ENCODE measurements at regions of chr4 and their contacts with region 1.

Region 1: DNA sequence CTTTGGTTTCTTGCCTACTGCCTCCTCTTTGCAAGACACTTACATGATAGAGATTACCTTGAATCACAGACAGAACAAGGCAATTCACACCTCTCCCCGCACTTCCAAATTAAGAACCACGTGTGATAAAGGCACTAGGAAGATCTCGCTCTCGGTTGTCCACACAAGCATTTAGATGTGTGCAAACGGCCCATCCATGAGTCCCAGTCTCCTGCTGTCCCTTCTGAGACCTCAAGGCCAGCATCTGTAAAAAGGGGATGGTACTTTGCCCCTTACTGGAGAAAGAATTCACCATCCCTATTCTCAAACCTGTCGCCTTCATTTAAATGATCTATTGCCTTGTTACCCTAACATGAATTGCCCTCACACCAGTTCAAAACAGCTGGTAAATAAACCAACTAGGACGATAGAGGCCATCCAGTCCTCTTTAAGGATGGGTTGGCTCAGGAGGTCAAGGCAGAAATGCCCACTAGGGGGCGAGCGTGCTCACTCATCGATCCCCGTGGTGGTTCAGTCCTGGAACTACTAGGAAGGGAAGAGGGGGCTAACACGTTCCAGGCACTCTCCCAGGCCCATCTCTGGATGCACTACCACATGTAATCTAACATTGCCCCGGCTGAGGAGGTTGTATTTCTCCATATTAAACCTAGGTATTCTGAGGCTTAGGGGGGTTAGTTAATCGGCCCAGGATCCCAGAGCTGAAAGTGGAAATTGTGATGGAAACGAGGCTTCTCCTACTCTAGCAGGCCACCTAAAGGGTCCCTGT is 95.8 kb downstream of the DHX15 start:
- DNase-seq: peak; percentile 78 to 92
- ATAC-seq: peak; percentile 77
- H3K4me3 ChIP-seq: no peak overlapping the region
- H3K27ac ChIP-seq: no peak overlapping the region
- H3K4me1 ChIP-seq: no peaks in the 10 kb centered on the region
- H3K27me3 ChIP-seq: no peaks in the 10 kb centered on the region

Region 2: GRCh38 chr4:25144870-25145481 is 656.4 kb after region 1 on chr4:
- intact Hi-C with region 1: loop called (anchors 5 to 10 kb)
- DNase-seq: no peak
- ATAC-seq: no peak
- H3K4me3 ChIP-seq: no peak overlapping the region
- H3K27ac ChIP-seq: no peak overlapping the region
- H3K4me1 ChIP-seq: no peaks in the 10 kb centered on the region
- H3K27me3 ChIP-seq: no peaks in the 10 kb centered on the region

Measured in aorta (tissue), 5 donors.